Calu3 (cell line): ENCODE measurements at regions of chr16 and their contacts with region 1.

Region 1: DNA sequence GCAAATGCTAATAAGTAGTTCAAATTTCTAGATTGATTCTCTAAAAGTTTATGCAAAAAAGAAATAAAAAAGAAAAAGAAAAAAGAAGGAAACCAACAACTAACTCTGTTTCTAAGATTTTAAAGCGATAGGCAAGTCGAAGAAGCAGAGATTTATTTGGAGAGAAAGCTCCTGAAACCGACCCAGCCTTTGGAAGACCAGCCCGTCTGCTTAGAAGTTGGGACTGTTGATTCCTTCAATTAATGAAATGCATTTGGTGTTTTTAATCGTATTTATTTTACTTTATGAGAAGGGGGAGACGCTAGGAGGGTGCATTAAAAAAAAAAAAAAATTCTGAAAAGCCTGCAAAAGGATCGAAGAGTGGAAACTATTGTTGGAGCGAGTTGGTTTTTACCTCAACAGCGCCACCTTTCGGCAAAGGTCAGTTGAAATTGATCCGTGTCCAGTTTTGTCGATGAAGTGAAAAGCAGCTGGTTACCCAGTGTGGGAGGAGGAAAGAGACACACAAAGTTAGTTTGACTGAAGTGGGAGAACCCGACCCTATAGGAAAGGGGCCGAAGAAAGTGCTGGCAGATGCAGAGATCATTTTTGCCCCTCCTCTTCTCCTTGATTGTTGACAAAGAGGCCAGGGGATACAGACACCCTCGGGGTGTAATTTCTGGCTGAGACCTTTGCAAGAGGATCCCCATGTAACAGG is 1.5 kb upstream of the MAF start:
- DNase-seq: peak; percentile 82
- H3K4me3 Mint-ChIP-seq: peak overlapping the region; percentile 81
- H3K27ac Mint-ChIP-seq: peak overlapping the region; percentile 10
- H3K4me1 Mint-ChIP-seq: peaks cover 24% of the 10 kb centered on the region
- H3K27me3 Mint-ChIP-seq: peaks cover 64% of the 10 kb centered on the region
- CTCF ChIP-seq: peak; percentile 84

Region 2: DNA sequence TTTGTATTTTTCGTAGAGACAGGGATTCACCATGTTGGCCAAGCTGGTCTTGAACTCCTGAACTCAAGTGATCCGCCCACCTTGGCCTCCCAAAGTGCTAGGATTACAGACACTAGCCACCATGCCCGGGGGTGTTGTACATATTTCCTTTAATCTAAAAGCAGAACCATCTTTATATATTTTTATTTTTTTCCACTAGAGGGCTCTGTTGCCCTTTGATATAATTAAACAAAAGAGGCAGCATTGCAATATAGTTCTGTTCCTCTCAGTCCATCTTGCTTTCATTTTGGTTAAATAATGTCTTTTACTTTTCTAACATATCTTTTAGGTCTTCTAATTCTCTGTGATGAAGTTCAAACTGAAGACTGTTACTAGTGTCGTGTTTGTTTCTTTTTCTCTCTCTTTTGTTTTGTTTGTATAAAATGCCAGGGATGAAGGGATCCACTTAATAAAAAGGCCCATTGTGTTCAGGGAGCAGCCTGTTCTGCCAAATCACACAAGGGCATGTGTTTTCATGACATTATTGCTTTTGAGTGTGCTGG is 1479.2 kb before region 1 on chr16:
- CTCF ChIA-PET with region 1: no interaction called
- intact Hi-C with region 1: loop called (anchors 2 kb)
- DNase-seq: peak; percentile 32
- H3K4me3 Mint-ChIP-seq: peak overlapping the region; percentile 39
- H3K27ac Mint-ChIP-seq: peak overlapping the region; percentile 46
- H3K4me1 Mint-ChIP-seq: peaks cover 8% of the 10 kb centered on the region
- H3K27me3 Mint-ChIP-seq: no peaks in the 10 kb centered on the region
- CTCF ChIP-seq: peak; percentile 60

Region 3: GRCh38 chr16:78503602-78504001 is 1098.5 kb before region 1 on chr16:
- CTCF ChIA-PET with region 1: no interaction called
- intact Hi-C with region 1: loop called (anchors 10 kb)
- DNase-seq: peak; percentile 53
- H3K4me3 Mint-ChIP-seq: no peak overlapping the region
- H3K27ac Mint-ChIP-seq: no peak overlapping the region
- H3K4me1 Mint-ChIP-seq: peaks cover 6% of the 10 kb centered on the region
- H3K27me3 Mint-ChIP-seq: no peaks in the 10 kb centered on the region
- CTCF ChIP-seq: peak; percentile 68

Region 4: GRCh38 chr16:79362300-79362970 is 239.6 kb before region 1 on chr16:
- CTCF ChIA-PET with region 1: no interaction called
- intact Hi-C with region 1: no loop called
- DNase-seq: no peak
- H3K4me3 Mint-ChIP-seq: no peak overlapping the region
- H3K27ac Mint-ChIP-seq: no peak overlapping the region
- H3K4me1 Mint-ChIP-seq: no peaks in the 10 kb centered on the region
- H3K27me3 Mint-ChIP-seq: peaks cover 19% of the 10 kb centered on the region
- CTCF ChIP-seq: no peak

Region 5: GRCh38 chr16:79640513-79641355 is 38.7 kb after region 1 on chr16:
- CTCF ChIA-PET with region 1: interaction called, 28 read pairs
- intact Hi-C with region 1: loop called (anchors 5 kb)
- DNase-seq: no peak
- H3K4me3 Mint-ChIP-seq: peak overlapping the region; percentile 52
- H3K27ac Mint-ChIP-seq: peak overlapping the region; percentile 97
- H3K4me1 Mint-ChIP-seq: peaks cover 53% of the 10 kb centered on the region
- H3K27me3 Mint-ChIP-seq: no peaks in the 10 kb centered on the region
- CTCF ChIP-seq: no peak

Region 6: DNA sequence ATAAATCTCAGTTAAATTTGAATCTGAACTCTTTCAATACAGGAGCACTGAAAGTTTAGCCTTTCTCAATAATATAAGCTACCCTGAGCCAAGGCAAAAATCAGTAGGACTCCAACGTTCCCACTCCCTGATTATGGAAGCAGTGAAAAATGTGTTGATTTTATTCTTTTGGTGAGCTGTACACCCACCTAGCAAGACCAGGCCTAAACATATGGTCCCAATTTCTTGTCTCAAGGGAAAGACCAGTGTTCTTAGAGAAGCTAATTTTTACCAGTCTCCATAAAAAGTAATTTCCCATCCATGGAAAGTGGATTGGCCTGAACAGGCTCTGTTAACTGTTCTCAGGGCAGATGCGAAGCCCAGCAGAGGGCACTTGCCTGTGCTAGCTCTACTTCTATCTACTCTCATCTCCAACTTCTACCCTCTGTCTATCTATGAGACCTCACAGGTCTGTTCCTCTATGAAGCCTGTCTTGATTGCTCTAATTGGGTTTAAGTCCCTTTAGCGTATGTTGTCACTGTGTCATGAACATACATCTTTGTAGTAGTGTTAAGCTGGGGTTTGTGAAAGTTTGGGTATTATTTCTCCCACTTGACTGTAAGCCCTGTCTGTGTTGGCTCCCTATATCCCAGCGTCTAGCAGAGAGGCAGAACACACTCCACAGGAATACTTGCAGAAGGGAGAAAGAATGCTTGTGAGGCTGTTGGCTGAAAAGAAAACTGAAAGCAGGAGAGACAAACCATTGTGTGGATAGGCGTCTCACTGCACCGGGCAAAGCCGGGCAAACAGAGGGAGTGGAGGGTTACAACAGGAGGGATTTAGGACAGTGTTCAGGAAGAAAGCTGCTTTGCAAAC is 165.6 kb after region 1 on chr16:
- CTCF ChIA-PET with region 1: interaction called, 4 read pairs
- intact Hi-C with region 1: loop called (anchors 5 kb)
- DNase-seq: peak; percentile 11
- H3K4me3 Mint-ChIP-seq: peak overlapping the region; percentile 29
- H3K27ac Mint-ChIP-seq: no peak overlapping the region
- H3K4me1 Mint-ChIP-seq: peaks cover 32% of the 10 kb centered on the region
- H3K27me3 Mint-ChIP-seq: peaks cover 12% of the 10 kb centered on the region
- CTCF ChIP-seq: no peak

Region 7: GRCh38 chr16:79805621-79806020 is 203.5 kb after region 1 on chr16:
- CTCF ChIA-PET with region 1: no interaction called
- intact Hi-C with region 1: no loop called
- DNase-seq: no peak
- H3K4me3 Mint-ChIP-seq: no peak overlapping the region
- H3K27ac Mint-ChIP-seq: no peak overlapping the region
- H3K4me1 Mint-ChIP-seq: no peaks in the 10 kb centered on the region
- H3K27me3 Mint-ChIP-seq: peaks cover 43% of the 10 kb centered on the region
- CTCF ChIP-seq: no peak

Region 8: DNA sequence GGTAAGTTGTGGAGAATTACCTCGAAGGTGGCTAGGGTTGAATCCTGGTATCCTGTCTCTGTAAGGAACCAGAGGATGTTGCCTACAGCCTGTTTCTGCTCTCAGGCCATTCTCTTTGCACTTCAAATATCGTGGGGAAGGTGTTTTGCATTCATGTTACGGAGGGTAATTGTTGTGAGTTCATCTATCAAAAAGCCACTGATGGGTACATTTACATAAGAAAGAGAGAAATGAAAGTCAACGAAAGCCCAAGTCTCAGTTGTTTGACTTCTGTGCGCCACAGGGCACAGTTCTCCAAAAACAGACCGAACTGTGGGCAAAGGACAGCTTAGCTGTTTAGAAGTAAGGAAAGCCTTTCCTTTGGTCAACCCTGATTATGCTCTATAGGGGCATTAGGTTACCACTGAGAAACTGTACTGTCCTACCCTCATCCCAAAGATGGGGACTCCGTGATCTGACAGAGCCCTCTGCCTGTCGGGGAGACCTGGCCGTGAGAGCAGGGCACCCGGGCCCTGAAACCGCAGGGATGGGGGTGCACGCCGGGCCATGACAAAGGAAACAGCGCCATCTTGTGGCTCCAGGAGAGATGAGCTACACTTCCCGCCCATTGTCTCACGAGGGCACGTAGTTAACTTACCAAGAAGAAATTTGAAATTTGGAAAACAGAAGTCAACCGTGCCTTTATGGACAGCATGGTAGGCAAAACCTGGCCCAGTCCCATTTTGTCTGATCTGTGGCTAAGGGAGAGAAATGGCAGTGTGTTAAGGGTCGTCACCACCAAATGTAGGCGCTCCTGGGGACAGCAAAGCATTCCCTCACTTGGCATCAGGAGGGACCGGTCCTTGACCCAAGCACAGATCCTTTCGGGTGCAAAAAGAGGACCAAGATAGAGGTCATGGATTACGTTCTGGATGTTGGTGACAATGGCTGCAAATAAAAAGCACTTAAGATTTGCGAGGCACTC is 864.2 kb after region 1 on chr16:
- CTCF ChIA-PET with region 1: interaction called, 5 read pairs
- intact Hi-C with region 1: loop called (anchors 5 kb)
- DNase-seq: peak; percentile 73
- H3K4me3 Mint-ChIP-seq: no peak overlapping the region
- H3K27ac Mint-ChIP-seq: no peak overlapping the region
- H3K4me1 Mint-ChIP-seq: peaks cover 18% of the 10 kb centered on the region
- H3K27me3 Mint-ChIP-seq: no peaks in the 10 kb centered on the region
- CTCF ChIP-seq: peak; percentile 92